GM10248 (cell line): ENCODE measurements at regions of chr3 and their contacts with region 1.

Region 1: GRCh38 chr3:186241910-186242821 is 119.9 kb downstream of the DGKG start:
- DNase-seq: peak; percentile 77
- CTCF ChIP-seq: peak; percentile 76

Region 2: DNA sequence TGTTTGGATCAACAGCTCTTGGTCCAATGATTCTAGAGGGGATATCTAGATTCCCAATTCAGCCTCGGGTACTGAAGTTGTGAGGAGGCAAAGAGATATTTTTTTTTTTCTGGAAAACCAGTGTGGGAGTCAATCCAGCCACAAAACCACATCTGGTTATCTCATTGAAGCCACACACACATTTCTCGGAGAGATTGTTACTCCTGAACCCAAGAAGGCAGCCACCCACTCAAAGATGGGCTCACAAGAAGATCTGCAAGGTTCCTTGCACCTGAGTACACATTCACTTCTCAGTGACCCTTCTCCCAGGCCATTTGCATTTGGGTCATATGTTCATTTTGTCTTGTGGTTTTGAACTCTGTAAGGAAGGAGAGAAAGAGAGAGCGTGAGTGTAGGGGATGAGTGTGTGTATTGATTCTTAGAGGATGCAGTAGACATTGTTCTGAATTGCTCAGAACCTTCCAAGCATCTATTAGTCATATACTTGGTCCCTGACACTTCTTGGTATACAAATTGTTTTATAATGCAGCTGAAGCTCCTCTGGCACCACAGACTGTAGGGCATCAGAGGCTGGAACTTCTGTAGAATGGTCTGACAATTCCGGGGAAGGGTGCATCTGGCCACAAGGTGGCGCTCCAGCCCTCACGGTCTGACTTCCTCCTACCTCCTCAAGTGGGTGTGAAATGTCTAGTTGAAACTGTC is 265.0 kb before region 1 on chr3:
- CTCF ChIA-PET with region 1: interaction called, 27 read pairs
- POLR2A ChIA-PET with region 1: no interaction called
- DNase-seq: peak; percentile 79
- CTCF ChIP-seq: peak; percentile 87

Region 3: DNA sequence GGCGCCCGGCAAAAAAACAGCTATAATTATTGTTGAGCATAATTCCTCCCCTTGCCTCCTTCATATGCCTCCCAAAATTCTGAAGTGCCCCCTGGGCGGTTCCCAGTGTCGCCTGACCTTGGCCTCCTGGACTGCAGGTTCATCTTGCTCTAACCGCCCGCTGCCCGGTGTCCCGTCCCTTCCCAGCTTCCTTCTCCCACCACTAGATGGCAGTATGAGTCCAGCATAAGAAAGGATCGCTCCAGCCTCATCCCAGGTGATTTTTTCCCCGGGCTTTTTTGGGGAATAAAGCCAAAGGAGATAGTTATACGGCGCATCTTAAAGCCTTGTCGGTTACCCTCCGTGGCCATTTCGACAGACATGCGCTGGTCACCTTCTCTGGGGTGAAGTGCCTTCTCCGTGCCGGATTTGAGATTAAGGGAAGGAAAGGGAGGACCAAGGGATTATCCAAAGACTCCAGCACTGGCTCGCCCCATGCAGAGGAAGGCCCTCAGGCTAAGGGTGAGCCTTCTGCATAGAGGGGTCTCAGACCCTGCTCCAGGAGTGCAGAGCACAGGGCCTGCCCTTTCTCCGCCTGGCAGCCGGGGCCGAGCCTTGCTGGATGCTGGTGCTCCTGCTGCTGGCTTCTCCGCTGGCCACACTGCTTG is 258.5 kb before region 1 on chr3:
- CTCF ChIA-PET with region 1: interaction called, 32 read pairs
- POLR2A ChIA-PET with region 1: no interaction called
- DNase-seq: peak; percentile 81
- CTCF ChIP-seq: peak; percentile 89

Region 4: DNA sequence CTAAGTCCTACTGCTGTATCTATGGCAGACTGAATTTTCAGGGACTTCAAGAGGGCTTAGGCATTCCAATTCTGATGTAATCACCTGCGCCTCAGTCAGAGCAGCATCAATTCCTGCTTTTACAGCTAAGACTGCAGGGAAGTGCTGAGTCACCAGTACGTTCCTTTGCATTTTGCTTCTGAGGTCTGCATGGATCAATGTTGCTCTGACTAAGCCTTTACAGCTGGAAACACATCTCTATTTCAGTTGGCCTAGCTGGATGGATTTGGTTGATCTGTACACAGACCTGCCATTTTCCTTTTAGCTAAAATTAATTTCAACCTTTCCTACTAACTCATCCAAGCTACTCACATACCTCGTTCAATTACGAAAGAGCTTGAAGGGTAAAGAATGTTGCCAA is 184.6 kb before region 1 on chr3:
- CTCF ChIA-PET with region 1: no interaction called
- POLR2A ChIA-PET with region 1: no interaction called
- DNase-seq: no peak
- CTCF ChIP-seq: no peak

Region 5: GRCh38 chr3:186209810-186210752 is 32.1 kb before region 1 on chr3:
- CTCF ChIA-PET with region 1: interaction called, 29 read pairs
- POLR2A ChIA-PET with region 1: no interaction called
- DNase-seq: peak; percentile 46
- CTCF ChIP-seq: no peak

Region 6: GRCh38 chr3:186217820-186218164 is 24.4 kb before region 1 on chr3:
- CTCF ChIA-PET with region 1: interaction called, 29 read pairs
- POLR2A ChIA-PET with region 1: no interaction called
- DNase-seq: peak; percentile 76
- CTCF ChIP-seq: no peak

Region 7: GRCh38 chr3:186298876-186299275 is 56.7 kb after region 1 on chr3:
- CTCF ChIA-PET with region 1: no interaction called
- POLR2A ChIA-PET with region 1: no interaction called
- DNase-seq: no peak
- CTCF ChIP-seq: no peak